Esophagus muscularis mucosa (tissue), 4 donors: ENCODE measurements at regions of chr6 and their contacts with region 1.

Region 1: DNA sequence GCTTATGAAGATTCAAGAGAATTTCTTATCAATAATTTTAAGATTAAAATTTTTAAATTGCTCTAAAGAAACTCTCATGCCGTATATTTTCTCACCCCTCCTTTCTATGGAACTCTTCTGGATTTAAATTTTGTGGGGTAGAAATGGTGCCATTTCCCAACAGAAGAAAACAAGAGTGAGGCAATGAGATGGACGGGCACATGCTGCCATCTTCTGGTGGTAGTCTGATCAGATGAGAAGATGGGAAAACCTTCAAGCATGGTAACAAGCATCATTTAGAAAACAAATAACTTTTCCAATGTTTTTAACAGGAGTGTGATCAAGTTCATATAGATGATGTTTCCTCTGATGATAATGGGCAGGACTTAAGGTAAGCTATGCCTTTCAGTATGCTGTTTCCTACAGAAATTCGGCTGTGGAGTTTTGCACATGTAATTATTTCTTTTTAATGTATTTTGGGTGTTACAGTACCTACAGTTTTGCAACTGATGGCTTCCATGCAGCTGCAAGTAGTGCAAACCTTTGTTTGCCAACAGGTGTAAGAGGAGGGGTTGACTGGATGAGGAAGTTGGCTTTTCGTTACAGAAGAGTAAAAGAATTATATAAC is 271.4 kb downstream of the EYA4 start:
- DNase-seq: no peak
- H3K4me3 ChIP-seq: no peak overlapping the region
- H3K27ac ChIP-seq: no peak overlapping the region
- H3K4me1 ChIP-seq: no peaks in the 10 kb centered on the region
- H3K27me3 ChIP-seq: no peaks in the 10 kb centered on the region
- CTCF ChIP-seq: peak; percentile 57 to 61 (median 57)
- EP300 ChIP-seq: no peak
- POLR2A ChIP-seq: no peak

Region 2: DNA sequence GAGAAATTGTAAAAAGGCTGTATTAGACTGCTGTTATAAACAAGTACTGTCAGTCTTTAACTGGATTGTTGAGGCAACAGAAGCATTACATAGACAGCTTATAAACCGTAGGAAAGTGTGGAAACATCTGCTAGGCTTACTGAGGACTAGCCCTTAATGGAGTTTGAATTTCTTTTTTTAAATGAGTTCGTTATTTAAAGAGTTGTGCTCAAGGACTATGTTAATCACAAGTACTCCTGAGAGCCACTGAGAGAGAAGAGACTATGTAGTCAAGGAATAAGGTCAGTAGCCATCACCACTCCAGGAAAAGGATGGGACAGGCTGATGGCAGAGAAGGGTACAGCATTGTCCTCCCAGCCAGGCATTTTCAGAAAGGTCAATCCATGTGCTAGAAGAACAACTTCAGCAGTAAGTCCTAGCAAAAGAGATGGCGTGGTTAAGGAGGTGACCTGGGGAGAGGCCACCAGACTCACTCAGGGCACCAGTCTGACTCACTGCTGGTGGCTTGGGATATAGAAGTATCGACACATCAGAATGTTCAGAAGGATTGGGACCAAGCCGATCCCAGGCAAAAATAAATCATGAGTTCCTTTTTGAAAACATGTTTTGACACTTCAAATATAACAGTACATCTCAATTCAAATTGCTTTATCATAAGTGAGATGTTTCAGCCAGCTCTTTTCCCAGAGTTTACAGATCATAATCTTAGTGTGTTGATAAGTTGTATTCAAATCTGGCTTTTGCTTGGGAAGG is 691.7 kb before region 1 on chr6:
- intact Hi-C with region 1: loop called (anchors 5 kb)
- DNase-seq: no peak
- H3K4me3 ChIP-seq: no peak overlapping the region
- H3K27ac ChIP-seq: peak overlapping the region in 3 of 4 donors; percentile 31 to 62 (median 52)
- H3K4me1 ChIP-seq: peaks cover 23 to 51% (median 46%) of the 10 kb centered on the region in 4 donors
- H3K27me3 ChIP-seq: no peaks in the 10 kb centered on the region
- CTCF ChIP-seq: no peak
- EP300 ChIP-seq: no peak
- POLR2A ChIP-seq: no peak